ENCODE measurements at regions of chr6 and their contacts with region 1.

Region 1: GRCh38 chr6:118372413-118372812 is 175.7 kb upstream of the PLN start:
- DNase-seq: peak; percentile 79

Region 2: DNA sequence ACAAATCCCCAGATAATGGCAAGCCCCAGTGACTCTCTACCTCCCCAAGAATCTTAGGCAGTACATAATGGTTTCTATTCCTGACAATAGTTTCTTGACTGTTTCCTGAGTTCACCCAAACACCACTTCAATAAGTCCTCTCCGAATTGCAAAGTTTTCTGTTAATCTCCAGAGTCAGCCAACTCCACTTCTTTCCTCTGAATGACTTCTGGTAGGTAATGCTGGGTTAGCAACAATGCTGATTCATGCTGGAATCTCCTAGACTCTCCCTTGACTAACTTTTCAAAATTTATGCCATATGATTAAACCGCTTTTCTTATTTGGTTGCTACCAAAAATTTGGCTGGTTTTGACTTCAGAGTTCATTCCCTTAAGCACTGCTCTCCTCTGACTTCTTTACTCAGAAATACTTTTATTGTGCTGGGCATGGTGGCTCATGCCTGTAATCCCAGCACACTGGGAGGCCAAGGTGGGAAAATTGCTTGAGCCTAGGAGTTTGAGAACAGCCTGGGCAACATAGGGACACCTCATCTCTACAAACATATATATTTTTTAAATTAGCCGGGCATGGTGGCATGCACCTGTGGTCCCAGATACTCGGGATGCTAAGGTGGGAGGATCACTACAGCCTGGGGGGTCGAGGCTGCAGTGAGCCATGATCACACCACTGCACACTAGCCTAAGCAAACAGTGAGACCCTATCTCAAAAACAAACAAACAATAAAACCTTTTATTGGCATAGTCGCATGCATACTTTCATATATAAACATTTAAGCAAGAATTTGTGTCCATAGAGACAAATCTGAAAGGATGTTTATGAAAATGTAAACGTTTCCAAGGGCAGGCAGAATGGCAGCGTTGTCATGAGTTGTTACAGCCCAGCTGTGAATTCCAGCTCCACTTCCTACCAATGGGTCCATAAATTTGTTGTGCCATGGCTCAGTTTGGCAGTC is 73.7 kb before region 1 on chr6:
- intact Hi-C with region 1: loop called (anchors 1 kb)
- DNase-seq: no peak

Region 3: DNA sequence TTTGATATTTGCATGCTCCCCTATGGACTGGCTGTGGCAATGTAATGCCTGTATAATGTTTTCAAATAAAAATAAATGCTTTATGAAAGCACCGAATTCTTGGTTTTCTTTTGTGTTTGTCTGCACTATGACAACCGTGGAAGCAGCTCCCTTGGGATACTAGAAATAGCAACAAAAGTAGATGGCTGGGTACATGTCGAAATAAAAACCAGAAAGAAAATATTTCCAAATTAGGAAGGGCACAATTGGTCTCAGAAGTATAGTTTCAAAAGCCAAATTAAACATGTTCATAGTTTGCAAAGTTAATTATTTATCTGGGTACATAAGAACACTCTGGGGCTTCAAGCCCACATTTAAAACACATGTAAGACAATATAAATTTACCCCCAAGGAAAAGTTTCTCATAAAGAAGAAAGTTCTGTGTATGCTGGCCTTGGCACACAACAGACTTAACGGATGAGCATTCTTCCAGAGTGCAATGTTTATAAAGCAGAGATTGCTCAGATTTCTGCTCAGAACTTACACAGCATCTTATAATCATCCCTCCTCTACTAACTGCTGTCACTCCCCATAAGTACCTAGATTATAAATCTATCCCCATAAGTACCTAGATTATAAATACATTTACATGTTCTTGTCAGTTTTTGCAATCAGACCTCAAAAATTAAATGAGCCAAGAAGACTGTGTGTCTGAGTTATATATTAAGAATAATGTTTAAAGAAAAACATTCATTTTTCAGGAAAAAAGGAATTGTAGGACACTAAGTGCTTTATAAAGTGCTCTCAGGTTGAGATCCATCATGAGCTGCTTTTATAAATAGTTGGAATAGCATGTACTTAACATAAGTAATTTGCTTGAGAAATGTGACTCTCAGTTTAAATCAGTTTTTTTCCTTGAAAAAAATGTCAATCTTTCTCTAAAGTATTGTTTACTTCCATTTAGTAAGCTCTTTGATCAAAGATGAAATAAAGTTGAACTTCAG is 54.5 kb before region 1 on chr6:
- intact Hi-C with region 1: loop called (anchors 5 kb)
- DNase-seq: no peak

Region 4: DNA sequence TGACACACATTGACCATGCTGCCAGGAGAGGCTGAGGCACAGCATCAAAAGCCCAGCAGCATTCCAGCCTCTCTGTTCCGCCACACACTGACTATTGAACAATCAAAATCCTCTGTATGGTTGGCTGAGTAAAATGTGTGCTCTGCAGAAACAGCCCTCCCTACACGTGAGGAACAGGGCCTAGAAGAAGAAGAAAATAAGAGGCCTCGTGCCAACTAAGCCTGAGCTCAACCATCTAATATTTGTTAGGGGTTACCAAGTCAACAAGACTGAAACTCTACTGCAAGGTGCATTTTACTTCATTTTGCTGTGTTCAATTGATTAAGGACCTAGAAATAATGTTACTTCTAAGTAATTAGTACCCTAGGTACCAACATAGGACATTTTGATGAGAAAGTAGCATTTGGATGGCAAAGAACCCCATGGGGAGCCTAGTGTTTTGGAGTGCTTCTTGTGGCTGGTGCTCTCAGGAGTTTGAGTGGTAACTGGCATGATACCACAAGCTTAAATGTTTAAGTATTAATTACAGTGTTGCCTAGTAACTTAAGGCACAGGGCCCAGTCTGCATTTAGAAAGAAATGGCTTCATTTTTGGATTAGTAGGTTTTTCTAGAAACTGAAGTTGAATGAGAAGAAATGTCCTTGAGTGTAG is 29.0 kb after region 1 on chr6:
- intact Hi-C with region 1: no loop called
- DNase-seq: no peak

Region 5: DNA sequence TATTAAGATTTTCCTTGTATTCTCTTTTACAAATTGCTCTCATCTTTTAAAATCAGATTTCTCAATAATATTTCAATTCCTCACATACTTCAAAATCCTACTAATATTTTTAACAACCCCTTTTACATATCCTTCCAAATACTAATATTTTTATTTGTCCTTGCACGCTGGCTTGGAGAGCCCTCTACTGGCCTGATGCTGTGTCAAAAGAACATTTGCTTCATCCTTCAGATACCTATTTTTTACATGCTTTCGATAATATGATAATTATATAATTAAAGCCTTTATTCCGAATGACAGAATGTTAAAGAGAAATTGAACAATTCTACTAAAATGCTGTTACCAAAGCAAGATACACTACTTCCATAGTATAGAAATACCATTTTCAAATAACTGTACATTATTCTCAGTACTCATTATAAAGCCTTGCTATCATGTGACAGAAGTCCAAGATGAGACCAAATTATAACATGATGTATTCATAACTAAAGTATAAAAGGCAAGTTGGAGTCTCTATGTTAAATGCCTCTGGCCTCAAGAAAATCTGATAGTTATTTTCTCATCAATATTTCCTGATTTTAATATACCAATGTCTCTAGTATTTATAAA is 136.7 kb after region 1 on chr6:
- intact Hi-C with region 1: loop called (anchors 2 kb)
- DNase-seq: no peak

Region 6: GRCh38 chr6:118524686-118525085 is 152.3 kb after region 1 on chr6:
- intact Hi-C with region 1: no loop called
- DNase-seq: no peak

Region 7: GRCh38 chr6:118537574-118537973 is 165.2 kb after region 1 on chr6:
- intact Hi-C with region 1: loop called (anchors 1 kb)
- DNase-seq: no peak

Measured in cardiac septum (tissue), 1 donor.